ENCODE measurements at regions of chr22 and their contacts with region 1.

Region 1: DNA sequence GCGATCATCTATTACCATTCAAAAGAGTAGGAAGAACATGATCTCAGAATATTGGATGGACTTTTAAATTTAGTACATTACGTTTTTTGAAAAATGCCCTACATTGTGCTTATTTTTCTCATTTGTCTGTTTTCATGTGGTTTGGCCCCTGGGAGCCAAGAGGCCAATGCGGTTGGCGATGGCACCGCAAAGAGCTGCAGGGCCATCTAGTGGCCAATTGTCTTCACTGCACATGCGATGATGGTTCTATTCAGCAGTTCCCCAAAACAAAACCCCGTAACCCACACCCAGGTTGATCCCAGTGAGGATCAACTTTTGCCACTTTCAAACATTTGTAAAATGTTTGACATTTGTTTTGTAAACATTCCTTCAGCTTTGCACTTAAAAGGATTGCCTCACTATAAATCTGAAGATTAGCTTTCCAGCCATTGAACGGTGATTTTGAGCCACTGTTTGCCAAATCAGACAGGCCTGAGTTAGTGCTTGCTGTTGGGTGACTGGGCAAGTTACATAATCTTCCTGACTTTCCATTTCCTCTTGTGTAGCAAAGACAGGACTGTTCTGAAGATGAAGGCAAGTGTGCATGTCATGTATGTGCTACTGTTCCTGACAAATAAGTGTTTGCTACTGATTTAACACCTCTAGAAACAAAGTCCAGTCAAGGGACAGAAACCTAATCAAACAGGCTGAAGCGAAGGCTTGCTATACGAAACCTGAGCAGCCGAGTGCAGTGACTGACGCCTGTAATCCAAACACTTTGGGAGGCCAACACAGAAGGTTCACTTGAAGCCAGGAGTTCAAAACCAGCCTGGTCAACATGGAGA is 29.2 kb upstream of the XBP1 start:
- DNase-seq: peak; percentile 84
- ATAC-seq: peak; percentile 83
- H3K4me3 ChIP-seq: no peak overlapping the region
- H3K4me3 Mint-ChIP-seq: no peak overlapping the region
- H3K27ac ChIP-seq: no peak overlapping the region
- H3K27ac Mint-ChIP-seq: no peak overlapping the region
- H3K4me1 ChIP-seq: peaks cover 0 to 7% of the 10 kb centered on the region in 2 donors
- H3K4me1 Mint-ChIP-seq: peaks cover 4% of the 10 kb centered on the region
- H3K27me3 ChIP-seq: no peaks in the 10 kb centered on the region
- H3K27me3 Mint-ChIP-seq: no peaks in the 10 kb centered on the region
- CTCF ChIP-seq: peak; percentile 99

Region 2: GRCh38 chr22:28019881-28020871 is 809.4 kb before region 1 on chr22:
- CTCF ChIA-PET with region 1: interaction called, 4 read pairs
- POLR2A ChIA-PET with region 1: no interaction called
- intact Hi-C with region 1: loop called (anchors 5 kb)
- DNase-seq: peak; percentile 67
- ATAC-seq: peak; percentile 80
- H3K4me3 ChIP-seq: no peak overlapping the region
- H3K4me3 Mint-ChIP-seq: no peak overlapping the region
- H3K27ac ChIP-seq: no peak overlapping the region
- H3K27ac Mint-ChIP-seq: no peak overlapping the region
- H3K4me1 ChIP-seq: no peaks in the 10 kb centered on the region
- H3K4me1 Mint-ChIP-seq: peaks cover 2% of the 10 kb centered on the region
- H3K27me3 ChIP-seq: no peaks in the 10 kb centered on the region
- H3K27me3 Mint-ChIP-seq: no peaks in the 10 kb centered on the region
- CTCF ChIP-seq: peak; percentile 91

Region 3: DNA sequence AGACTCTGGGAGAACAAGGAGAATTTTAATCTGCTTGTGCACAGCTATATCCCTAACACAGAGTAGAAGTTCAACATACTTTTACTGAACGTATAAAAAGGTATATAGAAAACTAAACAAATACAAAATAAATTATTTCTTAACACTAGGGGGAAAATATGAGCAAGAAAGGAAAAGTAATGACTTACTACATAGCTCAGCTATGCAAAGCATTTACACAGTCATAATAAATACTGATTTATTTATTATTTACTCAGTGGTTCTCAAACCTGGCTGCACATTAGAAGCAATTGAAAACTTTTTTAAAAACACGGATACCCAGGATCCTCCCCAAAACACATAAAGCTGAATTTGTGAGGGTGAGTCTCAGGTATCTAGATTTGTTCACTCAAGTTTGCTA is 332.4 kb before region 1 on chr22:
- CTCF ChIA-PET with region 1: no interaction called
- POLR2A ChIA-PET with region 1: no interaction called
- intact Hi-C with region 1: no loop called
- DNase-seq: no peak
- ATAC-seq: no peak
- H3K4me3 ChIP-seq: no peak overlapping the region
- H3K4me3 Mint-ChIP-seq: no peak overlapping the region
- H3K27ac ChIP-seq: no peak overlapping the region
- H3K27ac Mint-ChIP-seq: no peak overlapping the region
- H3K4me1 ChIP-seq: no peaks in the 10 kb centered on the region
- H3K4me1 Mint-ChIP-seq: no peaks in the 10 kb centered on the region
- H3K27me3 ChIP-seq: no peaks in the 10 kb centered on the region
- H3K27me3 Mint-ChIP-seq: peaks cover 22% of the 10 kb centered on the region
- CTCF ChIP-seq: no peak

Region 4: GRCh38 chr22:28600546-28601143 is 228.9 kb before region 1 on chr22:
- CTCF ChIA-PET with region 1: interaction called, 249 read pairs
- POLR2A ChIA-PET with region 1: no interaction called
- intact Hi-C with region 1: no loop called
- DNase-seq: peak; percentile 68
- ATAC-seq: no peak
- H3K4me3 ChIP-seq: no peak overlapping the region
- H3K4me3 Mint-ChIP-seq: no peak overlapping the region
- H3K27ac ChIP-seq: no peak overlapping the region
- H3K27ac Mint-ChIP-seq: no peak overlapping the region
- H3K4me1 ChIP-seq: no peaks in the 10 kb centered on the region
- H3K4me1 Mint-ChIP-seq: no peaks in the 10 kb centered on the region
- H3K27me3 ChIP-seq: no peaks in the 10 kb centered on the region
- H3K27me3 Mint-ChIP-seq: peaks cover 3% of the 10 kb centered on the region
- CTCF ChIP-seq: peak; percentile 86

Region 5: GRCh38 chr22:28779833-28780232 is 49.7 kb before region 1 on chr22:
- CTCF ChIA-PET with region 1: no interaction called
- POLR2A ChIA-PET with region 1: no interaction called
- intact Hi-C with region 1: no loop called
- DNase-seq: no peak
- ATAC-seq: no peak
- H3K4me3 ChIP-seq: no peak overlapping the region
- H3K4me3 Mint-ChIP-seq: no peak overlapping the region
- H3K27ac ChIP-seq: no peak overlapping the region
- H3K27ac Mint-ChIP-seq: no peak overlapping the region
- H3K4me1 ChIP-seq: peaks cover 3% of the 10 kb centered on the region in 2 donors
- H3K4me1 Mint-ChIP-seq: peaks cover 14% of the 10 kb centered on the region
- H3K27me3 ChIP-seq: no peaks in the 10 kb centered on the region
- H3K27me3 Mint-ChIP-seq: no peaks in the 10 kb centered on the region
- CTCF ChIP-seq: no peak

Region 6: GRCh38 chr22:28791841-28792490 is 37.6 kb before region 1 on chr22:
- CTCF ChIA-PET with region 1: interaction called, 17 read pairs
- POLR2A ChIA-PET with region 1: no interaction called
- intact Hi-C with region 1: loop called (anchors 1 kb)
- DNase-seq: peak; percentile 28
- ATAC-seq: peak; percentile 67
- H3K4me3 ChIP-seq: no peak overlapping the region
- H3K4me3 Mint-ChIP-seq: peak overlapping the region; percentile 40
- H3K27ac ChIP-seq: peak overlapping the region; percentile 32 to 66
- H3K27ac Mint-ChIP-seq: peak overlapping the region; percentile 69
- H3K4me1 ChIP-seq: peaks cover 28 to 32% of the 10 kb centered on the region in 2 donors
- H3K4me1 Mint-ChIP-seq: peaks cover 63% of the 10 kb centered on the region
- H3K27me3 ChIP-seq: no peaks in the 10 kb centered on the region
- H3K27me3 Mint-ChIP-seq: no peaks in the 10 kb centered on the region
- CTCF ChIP-seq: no peak

Region 7: GRCh38 chr22:28810821-28811491 is 18.6 kb before region 1 on chr22:
- CTCF ChIA-PET with region 1: interaction called, 39 read pairs
- POLR2A ChIA-PET with region 1: no interaction called
- intact Hi-C with region 1: no loop called
- DNase-seq: no peak
- ATAC-seq: no peak
- H3K4me3 ChIP-seq: peak overlapping the region in 4 of 5 experiments; percentile 6 to 53 (median 40)
- H3K4me3 Mint-ChIP-seq: peak overlapping the region; percentile 86
- H3K27ac ChIP-seq: no peak overlapping the region
- H3K27ac Mint-ChIP-seq: no peak overlapping the region
- H3K4me1 ChIP-seq: peaks cover 24 to 27% of the 10 kb centered on the region in 2 donors
- H3K4me1 Mint-ChIP-seq: peaks cover 30% of the 10 kb centered on the region
- H3K27me3 ChIP-seq: no peaks in the 10 kb centered on the region
- H3K27me3 Mint-ChIP-seq: no peaks in the 10 kb centered on the region
- CTCF ChIP-seq: no peak

Region 8: GRCh38 chr22:28873183-28873963 is 43.8 kb after region 1 on chr22:
- CTCF ChIA-PET with region 1: no interaction called
- POLR2A ChIA-PET with region 1: interaction called, 13 read pairs
- intact Hi-C with region 1: no loop called
- DNase-seq: no peak
- ATAC-seq: no peak
- H3K4me3 ChIP-seq: no peak overlapping the region
- H3K4me3 Mint-ChIP-seq: no peak overlapping the region
- H3K27ac ChIP-seq: no peak overlapping the region
- H3K27ac Mint-ChIP-seq: no peak overlapping the region
- H3K4me1 ChIP-seq: no peaks in the 10 kb centered on the region
- H3K4me1 Mint-ChIP-seq: no peaks in the 10 kb centered on the region
- H3K27me3 ChIP-seq: no peaks in the 10 kb centered on the region
- H3K27me3 Mint-ChIP-seq: no peaks in the 10 kb centered on the region
- CTCF ChIP-seq: no peak

Region 9: DNA sequence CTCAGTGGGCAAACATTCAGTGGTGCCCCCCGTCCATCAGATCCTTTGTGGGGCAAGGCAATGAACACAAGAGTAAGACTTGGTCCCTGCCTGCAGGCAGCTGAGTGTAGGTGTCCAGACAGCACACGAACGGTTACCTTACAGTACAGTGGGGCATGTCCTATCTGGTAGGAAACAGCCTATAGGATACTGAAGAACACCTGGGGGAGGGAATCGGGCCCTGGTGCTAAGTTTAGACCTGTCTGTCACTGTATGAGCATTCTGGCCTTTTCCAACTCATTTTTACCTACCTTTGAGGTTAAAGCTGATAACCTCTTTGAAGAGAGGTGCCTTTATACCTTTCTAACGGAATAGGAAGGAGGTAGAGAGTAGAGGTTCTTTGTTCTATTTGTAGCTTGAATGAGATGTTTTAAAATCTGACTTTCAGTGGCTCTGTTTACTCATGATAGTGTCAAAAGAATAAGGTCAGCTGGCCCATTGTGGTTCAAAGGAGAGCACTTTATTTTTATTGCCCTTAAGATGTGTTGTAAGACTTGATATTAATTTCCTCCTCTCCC is 62.7 kb after region 1 on chr22:
- CTCF ChIA-PET with region 1: no interaction called
- POLR2A ChIA-PET with region 1: no interaction called
- intact Hi-C with region 1: no loop called
- DNase-seq: no peak
- ATAC-seq: no peak
- H3K4me3 ChIP-seq: no peak overlapping the region
- H3K4me3 Mint-ChIP-seq: no peak overlapping the region
- H3K27ac ChIP-seq: no peak overlapping the region
- H3K27ac Mint-ChIP-seq: no peak overlapping the region
- H3K4me1 ChIP-seq: peaks cover 19 to 20% of the 10 kb centered on the region in 2 donors
- H3K4me1 Mint-ChIP-seq: peaks cover 23% of the 10 kb centered on the region
- H3K27me3 ChIP-seq: peaks cover 0 to 6% (median 1%) of the 10 kb centered on the region in 4 experiments
- H3K27me3 Mint-ChIP-seq: peaks cover 17% of the 10 kb centered on the region
- CTCF ChIP-seq: no peak

Region 10: GRCh38 chr22:29245637-29246385 is 416.2 kb after region 1 on chr22:
- CTCF ChIA-PET with region 1: interaction called, 10 read pairs
- POLR2A ChIA-PET with region 1: no interaction called
- intact Hi-C with region 1: no loop called
- DNase-seq: peak; percentile 76
- ATAC-seq: peak; percentile 89
- H3K4me3 ChIP-seq: no peak overlapping the region
- H3K4me3 Mint-ChIP-seq: no peak overlapping the region
- H3K27ac ChIP-seq: no peak overlapping the region
- H3K27ac Mint-ChIP-seq: no peak overlapping the region
- H3K4me1 ChIP-seq: peaks cover 3 to 4% of the 10 kb centered on the region in 2 donors
- H3K4me1 Mint-ChIP-seq: no peaks in the 10 kb centered on the region
- H3K27me3 ChIP-seq: peaks cover 0 to 17% (median 3%) of the 10 kb centered on the region in 4 experiments
- H3K27me3 Mint-ChIP-seq: peaks cover 20% of the 10 kb centered on the region
- CTCF ChIP-seq: peak; percentile 99

Measured in B cell (primary cell).